MCF 10A (cell line): ENCODE measurements at regions of chr5 and their contacts with region 1.

Region 1: DNA sequence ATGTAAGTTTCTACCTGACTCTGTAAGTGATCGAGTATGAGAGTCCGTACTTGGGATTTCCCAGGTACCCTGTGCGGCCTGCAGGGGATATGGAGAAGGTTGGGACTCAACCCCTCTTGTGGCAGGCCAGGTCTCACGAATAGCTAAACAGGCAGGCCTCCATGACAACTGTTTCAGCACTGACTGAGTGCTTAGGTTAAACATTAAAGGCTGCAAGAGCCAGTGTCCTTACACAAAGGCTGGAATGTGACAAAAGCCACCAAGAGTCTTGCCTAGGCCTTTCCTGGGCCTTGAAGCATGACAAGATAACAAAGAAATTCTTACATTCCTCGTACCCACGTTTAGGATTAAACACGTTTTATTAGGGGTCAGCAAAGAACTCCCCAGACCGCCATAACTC is 58.6 kb downstream of the THBS4 start:
- DNase-seq: no peak
- H3K4me3 Mint-ChIP-seq: no peak overlapping the region
- H3K27ac Mint-ChIP-seq: no peak overlapping the region
- H3K4me1 Mint-ChIP-seq: no peaks in the 10 kb centered on the region
- H3K27me3 Mint-ChIP-seq: no peaks in the 10 kb centered on the region
- CTCF ChIP-seq: no peak

Region 2: DNA sequence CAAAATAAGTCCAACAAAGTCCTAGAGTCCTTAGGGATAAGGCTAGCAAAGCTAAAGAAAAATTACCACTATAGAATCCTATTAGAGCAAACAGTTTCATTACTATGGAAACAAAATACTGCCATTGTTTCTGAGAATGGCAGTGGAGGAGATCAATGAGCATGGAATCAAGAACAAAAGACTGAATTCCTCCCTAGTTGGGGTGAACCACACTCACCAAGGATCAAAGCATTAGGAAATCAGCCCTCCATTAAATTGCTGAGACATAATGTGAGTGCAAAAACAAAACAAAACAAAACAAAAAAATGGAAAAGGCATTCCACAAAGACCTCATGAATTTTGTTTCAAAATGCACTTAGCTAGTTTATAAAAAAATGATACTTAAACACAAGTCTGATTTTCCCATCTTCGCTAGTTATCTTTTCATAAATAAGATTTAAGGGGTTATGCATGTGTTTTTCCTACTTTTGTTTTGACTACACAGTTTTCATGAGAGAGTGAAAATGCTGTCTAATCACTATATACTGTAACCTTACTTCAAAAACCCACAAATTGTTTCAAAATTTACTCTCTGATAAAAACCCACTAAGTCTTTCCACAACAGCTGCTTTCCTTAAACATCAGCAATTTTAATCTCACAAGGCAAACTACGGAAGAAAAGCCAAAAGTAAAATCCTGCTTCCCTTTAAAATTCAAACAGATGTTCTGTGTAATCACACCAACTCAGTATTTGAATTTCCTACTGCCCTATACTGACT is 152.4 kb after region 1 on chr5:
- CTCF ChIA-PET with region 1: interaction called, 12 read pairs
- POLR2A ChIA-PET with region 1: no interaction called
- intact Hi-C with region 1: no loop called
- DNase-seq: no peak
- H3K4me3 Mint-ChIP-seq: peak overlapping the region; percentile 69
- H3K27ac Mint-ChIP-seq: peak overlapping the region; percentile 90
- H3K4me1 Mint-ChIP-seq: peaks cover 17% of the 10 kb centered on the region
- H3K27me3 Mint-ChIP-seq: no peaks in the 10 kb centered on the region
- CTCF ChIP-seq: no peak

Region 3: GRCh38 chr5:80255732-80256479 is 162.1 kb after region 1 on chr5 and contains the start of gene SERINC5:
- CTCF ChIA-PET with region 1: interaction called, 4 read pairs
- POLR2A ChIA-PET with region 1: interaction called, 4 read pairs
- intact Hi-C with region 1: loop called (anchors 5 kb)
- DNase-seq: peak; percentile 79
- H3K4me3 Mint-ChIP-seq: peak within 1 kb of the TSS; percentile 92
- H3K27ac Mint-ChIP-seq: peak within 1 kb of the TSS; percentile 88
- H3K4me1 Mint-ChIP-seq: peaks cover 26% of the 10 kb centered on the region
- H3K27me3 Mint-ChIP-seq: no peaks in the 10 kb centered on the region
- CTCF ChIP-seq: no peak
- total RNA-seq, gene SERINC5: 17.1 and 17.2 TPM in 2 replicates

Region 4: DNA sequence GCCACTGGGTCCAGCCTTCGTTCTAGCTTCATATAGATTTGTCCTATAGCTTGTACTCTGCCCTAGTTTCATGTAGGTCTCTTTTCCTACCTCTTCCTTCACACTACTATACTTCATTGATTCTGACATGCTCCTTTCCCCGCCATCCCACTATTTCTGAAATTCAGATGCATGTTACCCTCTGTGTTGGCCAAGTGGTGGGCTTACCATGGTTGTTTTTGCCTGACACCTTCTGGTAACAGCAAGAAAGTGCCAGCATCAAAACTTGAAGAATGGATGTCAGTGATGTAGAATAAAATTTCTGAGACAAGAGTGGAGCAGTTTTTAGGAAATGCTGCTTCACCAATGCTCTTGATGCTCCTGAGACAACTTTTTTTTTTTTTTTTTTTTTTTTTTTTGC is 181.6 kb after region 1 on chr5:
- CTCF ChIA-PET with region 1: interaction called, 5 read pairs
- POLR2A ChIA-PET with region 1: no interaction called
- intact Hi-C with region 1: loop called (anchors 1 kb)
- DNase-seq: peak; percentile 30
- H3K4me3 Mint-ChIP-seq: no peak overlapping the region
- H3K27ac Mint-ChIP-seq: no peak overlapping the region
- H3K4me1 Mint-ChIP-seq: no peaks in the 10 kb centered on the region
- H3K27me3 Mint-ChIP-seq: no peaks in the 10 kb centered on the region
- CTCF ChIP-seq: peak; percentile 19

Region 5: GRCh38 chr5:80308526-80308925 is 214.7 kb after region 1 on chr5:
- CTCF ChIA-PET with region 1: interaction called, 304 read pairs
- POLR2A ChIA-PET with region 1: interaction called, 9 read pairs
- intact Hi-C with region 1: loop called (anchors 1 kb)
- DNase-seq: no peak
- H3K4me3 Mint-ChIP-seq: no peak overlapping the region
- H3K27ac Mint-ChIP-seq: no peak overlapping the region
- H3K4me1 Mint-ChIP-seq: no peaks in the 10 kb centered on the region
- H3K27me3 Mint-ChIP-seq: no peaks in the 10 kb centered on the region
- CTCF ChIP-seq: no peak